CD4-positive, alpha-beta T cell (primary cell): ENCODE measurements at regions of chr9 and their contacts with region 1.

Region 1: GRCh38 chr9:85702726-85703289 is 38.9 kb downstream of the AGTPBP1 start:
- DNase-seq: no peak
- ATAC-seq: no peak
- H3K4me3 ChIP-seq: no peak overlapping the region
- H3K4me3 Mint-ChIP-seq: no peak overlapping the region
- H3K27ac ChIP-seq: no peak overlapping the region
- H3K27ac Mint-ChIP-seq: peak overlapping the region; percentile 3
- H3K4me1 ChIP-seq: no peaks in the 10 kb centered on the region
- H3K4me1 Mint-ChIP-seq: peaks cover 56% of the 10 kb centered on the region
- H3K27me3 ChIP-seq: no peaks in the 10 kb centered on the region
- H3K27me3 Mint-ChIP-seq: no peaks in the 10 kb centered on the region
- CTCF ChIP-seq: no peak

Region 2: GRCh38 chr9:84419031-84419602 is 1283.7 kb before region 1 on chr9:
- CTCF ChIA-PET with region 1: no interaction called
- POLR2A ChIA-PET with region 1: no interaction called
- intact Hi-C with region 1: no loop called
- DNase-seq: no peak
- ATAC-seq: no peak
- H3K4me3 ChIP-seq: no peak overlapping the region
- H3K4me3 Mint-ChIP-seq: no peak overlapping the region
- H3K27ac ChIP-seq: no peak overlapping the region
- H3K27ac Mint-ChIP-seq: no peak overlapping the region
- H3K4me1 ChIP-seq: no peaks in the 10 kb centered on the region
- H3K4me1 Mint-ChIP-seq: no peaks in the 10 kb centered on the region
- H3K27me3 ChIP-seq: peaks cover 0 to 4% of the 10 kb centered on the region in 2 experiments
- H3K27me3 Mint-ChIP-seq: peaks cover 30% of the 10 kb centered on the region
- CTCF ChIP-seq: no peak

Region 3: DNA sequence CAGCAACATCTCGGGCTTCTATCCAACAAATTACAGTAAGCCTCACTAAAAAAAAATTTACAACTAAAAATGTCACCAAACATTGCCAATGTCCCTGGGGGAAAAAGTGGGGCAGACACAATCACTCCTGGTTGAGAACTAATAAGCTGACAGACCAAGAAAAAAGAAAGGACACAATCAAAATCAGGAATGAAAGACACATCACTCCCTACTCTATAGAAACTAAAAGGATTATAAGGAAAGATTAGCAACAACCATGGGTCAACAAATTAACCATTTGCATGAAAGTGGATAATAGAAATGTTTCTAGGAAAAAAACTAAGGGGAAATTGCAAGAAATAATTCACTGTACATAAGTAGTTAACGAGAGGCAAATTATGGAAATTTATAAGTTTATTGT is 14.4 kb before region 1 on chr9:
- CTCF ChIA-PET with region 1: interaction called, 11 read pairs
- POLR2A ChIA-PET with region 1: interaction called, 4 read pairs
- intact Hi-C with region 1: no loop called
- DNase-seq: no peak
- ATAC-seq: no peak
- H3K4me3 ChIP-seq: no peak overlapping the region
- H3K4me3 Mint-ChIP-seq: no peak overlapping the region
- H3K27ac ChIP-seq: no peak overlapping the region
- H3K27ac Mint-ChIP-seq: no peak overlapping the region
- H3K4me1 ChIP-seq: no peaks in the 10 kb centered on the region
- H3K4me1 Mint-ChIP-seq: peaks cover 15% of the 10 kb centered on the region
- H3K27me3 ChIP-seq: no peaks in the 10 kb centered on the region
- H3K27me3 Mint-ChIP-seq: no peaks in the 10 kb centered on the region
- CTCF ChIP-seq: no peak